ENCODE measurements at regions of chr12 and their contacts with region 1.

Region 1: DNA sequence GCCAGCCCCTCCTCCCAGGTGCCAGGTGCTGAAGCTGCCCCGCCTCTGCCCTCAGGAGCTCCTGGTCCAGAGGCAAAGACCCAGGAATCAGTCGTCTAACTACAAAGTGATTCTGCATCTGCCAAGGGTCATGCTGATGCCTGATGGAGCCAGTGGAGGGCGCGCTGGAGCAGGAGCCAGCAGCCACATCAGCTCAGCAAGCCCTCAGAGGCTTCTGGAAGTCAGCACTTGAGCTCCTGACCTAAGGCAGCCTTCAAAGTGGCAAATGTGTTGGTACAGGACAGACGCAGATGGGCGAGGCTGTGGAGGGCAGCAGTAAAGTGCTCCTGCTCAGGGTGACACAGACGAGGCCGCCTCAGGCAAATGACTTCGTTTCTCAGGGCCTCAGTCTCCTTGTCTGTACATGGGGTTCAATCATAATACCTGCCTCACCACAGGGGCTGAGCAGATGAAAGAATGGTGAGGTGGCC is 10.9 kb downstream of the C12orf43 start:
- DNase-seq: peak; percentile 57 to 87
- H3K4me3 ChIP-seq: no peak overlapping the region
- H3K27ac ChIP-seq: no peak overlapping the region
- H3K4me1 ChIP-seq: no peaks in the 10 kb centered on the region
- H3K27me3 ChIP-seq: no peaks in the 10 kb centered on the region
- CTCF ChIP-seq: peak; percentile 93 to 96 (median 96)
- EP300 ChIP-seq: no peak
- POLR2A ChIP-seq: no peak
- RAD21 ChIP-seq: peak; percentile 74 to 81

Region 2: GRCh38 chr12:120737557-120738251 is 267.7 kb before region 1 on chr12:
- CTCF ChIA-PET with region 1: interaction called, 13 read pairs
- POLR2A ChIA-PET with region 1: no interaction called
- DNase-seq: peak in 1 of 2 experiments; percentile 68
- H3K4me3 ChIP-seq: no peak overlapping the region
- H3K27ac ChIP-seq: no peak overlapping the region
- H3K4me1 ChIP-seq: no peaks in the 10 kb centered on the region
- H3K27me3 ChIP-seq: no peaks in the 10 kb centered on the region
- CTCF ChIP-seq: peak; percentile 53 to 70 (median 61)
- EP300 ChIP-seq: no peak
- POLR2A ChIP-seq: no peak
- RAD21 ChIP-seq: peak; percentile 74 to 82

Region 3: GRCh38 chr12:120914794-120915193 is 90.6 kb before region 1 on chr12:
- CTCF ChIA-PET with region 1: no interaction called
- POLR2A ChIA-PET with region 1: no interaction called
- DNase-seq: no peak
- H3K4me3 ChIP-seq: no peak overlapping the region
- H3K27ac ChIP-seq: no peak overlapping the region
- H3K4me1 ChIP-seq: no peaks in the 10 kb centered on the region
- H3K27me3 ChIP-seq: no peaks in the 10 kb centered on the region
- CTCF ChIP-seq: no peak
- EP300 ChIP-seq: no peak
- POLR2A ChIP-seq: no peak
- RAD21 ChIP-seq: no peak

Region 4: DNA sequence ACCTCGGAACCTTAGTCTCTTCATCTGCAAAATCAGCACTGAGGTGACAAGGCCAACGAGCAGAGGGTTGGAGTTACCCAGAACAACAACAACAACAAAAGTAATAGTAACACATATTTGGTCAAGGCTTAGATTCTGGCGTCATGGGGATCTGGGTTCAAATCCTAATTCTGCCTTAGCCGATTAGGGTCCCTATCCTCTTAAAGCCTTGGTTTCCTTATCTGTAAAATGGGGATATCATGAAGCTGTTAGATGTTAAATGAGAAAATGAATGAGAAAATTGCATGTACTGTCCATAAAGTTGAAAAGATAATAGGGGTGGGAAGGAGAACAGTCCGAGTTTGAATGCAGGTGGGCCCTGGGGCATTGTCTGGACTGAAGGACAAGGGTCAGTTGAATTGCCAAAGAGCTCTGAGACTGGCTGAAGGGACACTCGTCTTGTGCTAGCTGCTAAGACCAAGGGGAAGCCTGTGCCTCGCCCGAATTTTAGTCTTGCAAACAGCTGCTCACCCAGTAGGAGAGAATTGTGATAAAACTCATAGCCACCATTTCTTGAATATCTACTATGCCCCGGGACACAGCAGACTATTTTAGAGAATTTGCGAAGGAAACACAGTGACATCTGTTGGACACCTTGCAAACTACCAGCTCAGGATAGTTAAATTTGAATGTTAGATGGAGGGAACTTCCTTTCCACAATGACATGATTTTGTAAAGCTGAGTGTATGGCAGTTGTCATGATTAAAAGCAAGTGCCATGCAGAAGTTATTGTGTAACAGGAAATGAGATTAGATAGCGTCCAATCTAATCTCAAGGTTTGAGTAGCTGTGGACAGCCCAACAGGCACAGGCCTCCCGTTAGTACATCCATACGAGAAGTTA is 33.8 kb before region 1 on chr12:
- CTCF ChIA-PET with region 1: interaction called, 24 read pairs
- POLR2A ChIA-PET with region 1: interaction called, 3 read pairs
- DNase-seq: no peak
- H3K4me3 ChIP-seq: no peak overlapping the region
- H3K27ac ChIP-seq: no peak overlapping the region
- H3K4me1 ChIP-seq: peaks cover 0 to 3% (median under 1%) of the 10 kb centered on the region in 4 experiments; a peak in 3 of 7 replicates
- H3K27me3 ChIP-seq: no peaks in the 10 kb centered on the region
- CTCF ChIP-seq: peak in 2 of 3 experiments; percentile 61 to 81; a peak in 3 of 4 replicates
- EP300 ChIP-seq: no peak
- POLR2A ChIP-seq: no peak
- RAD21 ChIP-seq: peak; percentile 84 to 89

Region 5: GRCh38 chr12:120994059-120994458 is 11.3 kb before region 1 on chr12:
- CTCF ChIA-PET with region 1: interaction called, 40 read pairs
- POLR2A ChIA-PET with region 1: no interaction called
- DNase-seq: no peak
- H3K4me3 ChIP-seq: no peak overlapping the region
- H3K27ac ChIP-seq: no peak overlapping the region
- H3K4me1 ChIP-seq: peaks cover 0 to 3% (median under 1%) of the 10 kb centered on the region in 4 experiments; a peak in 5 of 7 replicates
- H3K27me3 ChIP-seq: no peaks in the 10 kb centered on the region
- CTCF ChIP-seq: no peak
- EP300 ChIP-seq: no peak
- POLR2A ChIP-seq: no peak
- RAD21 ChIP-seq: no peak

Region 6: GRCh38 chr12:121026274-121027045 is 21.1 kb after region 1 on chr12:
- CTCF ChIA-PET with region 1: interaction called, 18 read pairs
- POLR2A ChIA-PET with region 1: interaction called, 5 read pairs
- DNase-seq: no peak
- H3K4me3 ChIP-seq: no peak overlapping the region
- H3K27ac ChIP-seq: no peak overlapping the region
- H3K4me1 ChIP-seq: peaks cover 0 to 4% (median 3%) of the 10 kb centered on the region in 4 experiments; a peak in 4 of 7 replicates
- H3K27me3 ChIP-seq: no peaks in the 10 kb centered on the region
- CTCF ChIP-seq: peak in 2 of 3 experiments; percentile 12 to 36; a peak in 2 of 4 replicates
- EP300 ChIP-seq: no peak
- POLR2A ChIP-seq: no peak
- RAD21 ChIP-seq: no peak

Region 7: DNA sequence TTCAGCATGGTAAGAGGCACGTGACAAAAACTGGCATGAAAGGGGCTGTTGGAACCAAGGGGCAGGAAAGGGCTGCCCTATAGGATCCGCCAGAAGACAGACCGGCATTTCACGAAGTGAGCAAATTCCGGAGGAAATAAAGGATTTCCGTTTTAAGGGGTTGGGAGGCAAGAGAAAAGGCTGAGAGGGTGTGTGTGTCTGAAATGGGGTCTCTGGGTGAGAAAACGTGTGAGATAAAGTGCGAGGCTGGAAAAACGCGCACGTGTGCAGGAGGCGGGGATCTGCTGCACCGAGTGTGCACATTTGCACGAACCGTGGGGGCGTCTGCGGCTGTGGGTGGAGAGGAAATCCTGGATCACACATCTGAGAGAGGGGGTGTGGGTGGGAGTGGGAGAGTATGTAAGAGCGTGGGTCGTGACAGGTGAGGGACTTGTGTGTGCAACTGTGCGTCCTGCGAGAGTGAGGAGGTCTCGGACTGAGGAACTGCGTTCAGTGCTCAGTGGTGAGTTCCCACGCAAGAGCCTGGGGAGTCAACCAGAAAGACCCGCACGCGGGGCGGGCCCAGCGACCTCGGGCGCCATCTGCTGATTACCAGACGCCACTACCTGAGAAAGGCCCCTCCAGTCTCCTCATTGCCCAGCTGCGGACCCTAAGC is 90.3 kb after region 1 on chr12:
- CTCF ChIA-PET with region 1: interaction called, 13 read pairs
- POLR2A ChIA-PET with region 1: interaction called, 3 read pairs
- DNase-seq: peak in 1 of 2 experiments; percentile 91
- H3K4me3 ChIP-seq: peak overlapping the region; percentile 9 to 49 (median 26); a peak in 5 of 8 replicates
- H3K27ac ChIP-seq: no peak overlapping the region
- H3K4me1 ChIP-seq: peaks cover 0 to 3% (median under 1%) of the 10 kb centered on the region in 4 experiments; a peak in 1 of 7 replicates
- H3K27me3 ChIP-seq: peaks cover 0 to 7% (median 5%) of the 10 kb centered on the region in 4 experiments; a peak in 6 of 7 replicates
- CTCF ChIP-seq: peak; percentile 81 to 88 (median 83)
- EP300 ChIP-seq: no peak
- POLR2A ChIP-seq: no peak
- RAD21 ChIP-seq: peak; percentile 70 to 80

Region 8: DNA sequence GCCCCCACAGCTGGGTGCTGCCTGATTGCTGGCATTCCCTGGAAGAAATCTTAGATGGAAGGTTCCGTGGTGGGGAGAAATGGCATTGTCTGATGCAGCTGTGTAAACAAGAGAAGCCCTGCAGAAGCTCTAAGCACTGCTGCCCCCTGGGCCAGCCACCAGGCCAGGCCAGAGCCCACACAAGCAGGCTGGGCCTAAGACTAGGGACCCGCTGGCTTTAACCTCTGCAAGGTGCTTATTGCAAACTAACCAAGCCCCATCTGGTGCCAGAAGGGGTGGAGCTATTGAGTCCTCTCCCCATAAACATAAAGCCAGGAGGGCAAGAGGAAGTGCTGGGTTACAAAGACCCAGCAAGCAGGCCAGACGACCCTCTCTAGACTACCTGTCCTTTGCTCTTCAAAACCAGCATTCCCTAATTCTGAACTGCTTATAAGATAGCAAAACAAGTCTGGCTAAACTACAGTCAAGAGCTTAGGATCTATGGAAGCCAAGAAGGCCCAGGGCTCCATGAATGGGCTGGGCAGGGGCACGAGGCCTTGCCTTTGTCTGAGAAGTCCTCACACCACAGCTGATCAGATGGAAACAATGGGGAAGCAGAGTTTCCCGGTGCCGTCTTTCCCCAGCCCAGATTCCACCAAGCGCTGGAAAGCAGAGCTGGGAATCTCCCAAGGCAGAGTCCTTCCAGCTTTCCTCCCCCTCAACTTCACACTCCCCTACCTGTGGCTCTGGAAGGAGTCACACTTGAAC is 233.4 kb after region 1 on chr12:
- CTCF ChIA-PET with region 1: no interaction called
- POLR2A ChIA-PET with region 1: no interaction called
- DNase-seq: no peak
- H3K4me3 ChIP-seq: no peak overlapping the region
- H3K27ac ChIP-seq: peak overlapping the region; percentile 67; the same call in 1 of the 2 replicates
- H3K4me1 ChIP-seq: peaks cover 0 to 16% (median 7%) of the 10 kb centered on the region in 4 experiments; a peak in 6 of 7 replicates
- H3K27me3 ChIP-seq: no peaks in the 10 kb centered on the region
- CTCF ChIP-seq: peak in 2 of 3 experiments; percentile 18 to 23; a peak in 2 of 4 replicates
- EP300 ChIP-seq: no peak
- POLR2A ChIP-seq: 0 out of 3 replicates have a peak, but pooled peaks of 1 of the 2 experiments have one; percentile 16
- RAD21 ChIP-seq: no peak; a peak in 1 of 4 replicates

Measured in H1 (cell line).